Gastrocnemius medialis (tissue), 4 donors: ENCODE measurements at regions of chr10 and their contacts with region 1.

Region 1: GRCh38 chr10:124388823-124389612 is 29.7 kb downstream of the OAT start:
- DNase-seq: peak; percentile 67 to 79
- ATAC-seq: peak; percentile 93 to 95
- H3K4me3 ChIP-seq: peak overlapping the region; percentile 57 to 68 (median 62)
- H3K27ac ChIP-seq: peak overlapping the region in 2 of 4 donors; percentile 26 to 47
- H3K4me1 ChIP-seq: peaks cover 0 to 9% of the 10 kb centered on the region in 2 donors
- H3K27me3 ChIP-seq: no peaks in the 10 kb centered on the region
- CTCF ChIP-seq: peak; percentile 88 to 99 (median 95)
- POLR2A ChIP-seq: no peak

Region 2: GRCh38 chr10:123582084-123582989 is 806.7 kb before region 1 on chr10:
- in situ Hi-C with region 1: loop called (anchors 25 kb)
- intact Hi-C with region 1: loop called (anchors 1 kb)
- DNase-seq: peak; percentile 47 to 55
- ATAC-seq: peak; percentile 74 to 75
- H3K4me3 ChIP-seq: no peak overlapping the region
- H3K27ac ChIP-seq: no peak overlapping the region
- H3K4me1 ChIP-seq: peaks cover 0 to 5% of the 10 kb centered on the region in 2 donors
- H3K27me3 ChIP-seq: peaks cover 0 to 10% (median 3%) of the 10 kb centered on the region in 3 donors
- CTCF ChIP-seq: peak in 4 of 5 experiments; percentile 34 to 73 (median 68)
- POLR2A ChIP-seq: no peak

Region 3: GRCh38 chr10:124106241-124106879 is 282.7 kb before region 1 on chr10:
- in situ Hi-C with region 1: loop called in 1 of 4 experiments (anchors 10 kb)
- intact Hi-C with region 1: no loop called
- DNase-seq: peak in 1 of 2 donors; percentile 37
- ATAC-seq: peak; percentile 52 to 68
- H3K4me3 ChIP-seq: no peak overlapping the region
- H3K27ac ChIP-seq: peak overlapping the region; percentile 31 to 73 (median 54)
- H3K4me1 ChIP-seq: peaks cover 10 to 15% of the 10 kb centered on the region in 2 donors
- H3K27me3 ChIP-seq: no peaks in the 10 kb centered on the region
- CTCF ChIP-seq: no peak
- POLR2A ChIP-seq: no peak

Region 4: DNA sequence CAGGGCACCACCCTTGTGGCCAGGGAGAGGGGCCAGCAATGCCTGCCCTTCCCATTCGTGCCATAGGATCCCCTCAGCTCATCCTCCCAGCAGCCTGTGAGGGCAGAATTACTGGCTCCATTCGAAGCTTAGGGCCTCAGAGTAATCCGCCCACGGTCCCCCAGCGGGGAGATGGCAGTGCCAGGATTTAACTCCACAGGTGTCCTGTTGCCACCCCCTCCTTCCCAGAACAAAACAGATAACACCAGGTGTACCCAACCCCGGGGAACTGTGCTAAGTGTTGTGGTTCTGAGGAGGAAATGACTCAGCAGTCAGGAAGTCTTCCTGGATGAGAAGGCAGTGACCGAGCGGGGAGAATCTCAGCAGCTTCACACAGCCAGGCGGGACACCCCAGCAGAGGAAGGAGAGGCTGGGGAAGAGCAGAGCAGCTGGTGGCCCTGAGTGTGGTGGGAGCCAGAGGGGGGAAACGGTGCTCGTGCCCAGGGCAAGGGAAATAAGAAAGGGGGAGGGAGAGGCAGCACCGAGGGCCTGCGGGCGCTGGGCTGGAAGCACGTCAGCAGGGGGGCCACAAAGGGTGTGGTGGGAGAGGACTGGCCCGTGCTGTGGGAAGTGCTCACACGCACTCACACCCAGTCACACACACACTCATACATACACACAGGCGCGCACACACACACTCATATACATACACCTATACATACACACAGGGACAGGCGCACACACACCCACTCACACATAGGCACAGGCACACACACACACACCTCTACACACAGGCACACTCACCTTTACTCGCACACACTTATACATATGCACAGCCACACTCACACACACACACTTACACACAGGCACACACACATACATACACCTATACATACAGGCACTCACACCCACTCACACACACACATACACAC is 235.8 kb before region 1 on chr10:
- in situ Hi-C with region 1: no loop called
- intact Hi-C with region 1: loop called (anchors 5 kb)
- DNase-seq: peak; percentile 53 to 54
- ATAC-seq: peak; percentile 66 to 78
- H3K4me3 ChIP-seq: peak overlapping the region in 1 of 4 donors; percentile 16
- H3K27ac ChIP-seq: peak overlapping the region; percentile 73 to 82 (median 74)
- H3K4me1 ChIP-seq: peaks cover 47 to 55% of the 10 kb centered on the region in 2 donors
- H3K27me3 ChIP-seq: no peaks in the 10 kb centered on the region
- CTCF ChIP-seq: no peak
- POLR2A ChIP-seq: no peak